Tibial artery (tissue), 4 donors: ENCODE measurements at regions of chr5 and their contacts with region 1.

Region 1: DNA sequence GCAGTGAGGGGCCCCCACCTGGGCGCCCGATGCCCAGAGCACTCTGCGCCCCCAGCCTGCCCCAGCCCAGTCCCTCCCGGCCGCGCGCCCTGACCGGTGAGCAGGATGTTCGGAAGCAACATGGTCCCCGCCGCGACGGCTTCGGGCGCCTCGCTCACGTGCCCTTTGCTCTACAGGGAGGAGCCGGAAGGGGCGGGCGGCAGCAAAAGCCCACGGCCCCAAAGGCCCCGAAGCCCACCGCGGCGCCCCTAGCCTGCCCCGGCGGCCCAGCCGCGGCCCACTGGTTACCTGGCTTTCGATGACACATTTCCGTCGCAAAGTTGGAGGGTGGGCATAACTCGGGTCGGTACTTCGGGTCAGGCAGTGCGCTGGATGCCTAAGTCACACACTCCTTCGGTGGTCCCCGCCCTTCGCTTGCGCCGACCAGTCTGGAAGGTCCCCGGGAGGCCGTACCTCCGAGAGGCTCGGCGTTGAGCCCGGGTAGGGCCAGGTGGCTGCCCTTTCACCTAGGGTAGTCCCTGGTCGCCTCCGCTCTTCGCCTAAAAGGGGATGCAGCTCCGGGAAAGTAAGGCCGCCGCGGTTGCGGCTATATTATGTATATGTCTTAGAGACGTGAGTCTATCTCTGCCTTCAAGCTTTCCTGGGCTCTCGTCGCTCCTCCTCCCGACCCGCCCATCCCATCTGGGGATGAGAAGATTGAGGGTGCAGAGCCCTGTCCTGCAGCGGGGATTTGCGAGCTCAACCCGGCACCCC is at the starts of genes AK6, RAD17 and TAF9:
- DNase-seq: peak; percentile 92 to 94
- H3K4me3 ChIP-seq: peak within 1 kb of the TSS; percentile 78 to 91
- H3K27ac ChIP-seq: peak within 1 kb of the TSS; percentile 95 to 97
- H3K4me1 ChIP-seq: peaks cover 0 to 35% (median 15%) of the 10 kb centered on the region in 4 donors
- H3K27me3 ChIP-seq: no peaks in the 10 kb centered on the region
- CTCF ChIP-seq: no peak

Region 2: DNA sequence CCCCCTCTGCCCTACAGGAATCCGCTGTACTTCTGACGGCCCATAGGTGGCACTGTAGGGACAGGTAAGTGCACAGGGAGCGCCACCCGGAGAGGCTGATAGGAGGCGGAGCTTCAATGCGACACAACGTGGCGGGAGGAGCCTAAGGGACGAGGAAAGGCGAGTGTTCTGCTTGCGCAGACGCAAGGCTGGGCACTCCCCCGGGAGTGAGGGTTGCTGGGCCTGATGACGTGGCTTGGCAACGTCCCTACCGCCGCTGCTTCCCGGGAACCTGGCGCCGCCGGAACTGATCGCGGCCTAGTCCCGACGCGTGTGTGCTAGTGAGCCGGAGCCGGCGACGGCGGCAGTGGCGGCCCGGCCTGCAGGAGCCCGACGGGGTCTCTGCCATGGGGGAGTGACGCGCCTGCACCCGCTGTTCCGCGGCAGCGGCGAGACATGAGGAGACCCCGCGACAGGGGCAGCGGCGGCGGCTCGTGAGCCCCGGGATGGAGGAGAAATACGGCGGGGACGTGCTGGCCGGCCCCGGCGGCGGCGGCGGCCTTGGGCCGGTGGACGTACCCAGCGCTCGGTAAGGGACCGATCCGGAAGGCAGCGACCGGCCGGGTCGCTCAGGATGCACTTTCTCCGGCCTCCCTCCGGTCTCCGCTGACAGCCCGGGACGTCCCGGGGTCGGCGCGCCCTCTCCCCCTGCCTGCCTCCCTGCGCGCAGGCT is 275.6 kb before region 1 on chr5 and contains the start of gene SLC30A5:
- intact Hi-C with region 1: loop called (anchors 5 kb)
- DNase-seq: peak; percentile 100
- H3K4me3 ChIP-seq: peak within 1 kb of the TSS; percentile 58 to 96
- H3K27ac ChIP-seq: peak within 1 kb of the TSS; percentile 86 to 99
- H3K4me1 ChIP-seq: peaks cover 0 to 24% (median 11%) of the 10 kb centered on the region in 4 donors
- H3K27me3 ChIP-seq: no peaks in the 10 kb centered on the region
- CTCF ChIP-seq: peak; percentile 86 to 87

Region 3: GRCh38 chr5:69234457-69235268 is 134.9 kb before region 1 on chr5 and contains the start of gene CDK7:
- intact Hi-C with region 1: loop called (anchors 10 kb)
- DNase-seq: peak; percentile 94 to 96
- H3K4me3 ChIP-seq: peak within 1 kb of the TSS; percentile 84 to 88
- H3K27ac ChIP-seq: peak within 1 kb of the TSS; percentile 88 to 89
- H3K4me1 ChIP-seq: peaks cover 0 to 51% (median 20%) of the 10 kb centered on the region in 4 donors
- H3K27me3 ChIP-seq: no peaks in the 10 kb centered on the region
- CTCF ChIP-seq: no peak